ENCODE measurements at regions of chr19 and their contacts with region 1.

Region 1: GRCh38 chr19:19568802-19569756 is 31.0 kb downstream of the CILP2 start:
- DNase-seq: peak; percentile 33
- H3K4me3 Mint-ChIP-seq: no peak overlapping the region
- H3K27ac Mint-ChIP-seq: no peak overlapping the region
- H3K4me1 Mint-ChIP-seq: no peaks in the 10 kb centered on the region
- H3K27me3 Mint-ChIP-seq: no peaks in the 10 kb centered on the region
- CTCF ChIP-seq: no peak

Region 2: GRCh38 chr19:19475015-19475765 is 93.9 kb before region 1 on chr19:
- CTCF ChIA-PET with region 1: no interaction called
- POLR2A ChIA-PET with region 1: no interaction called
- intact Hi-C with region 1: no loop called
- DNase-seq: no peak
- H3K4me3 Mint-ChIP-seq: no peak overlapping the region
- H3K27ac Mint-ChIP-seq: peak overlapping the region; percentile 31
- H3K4me1 Mint-ChIP-seq: peaks cover 4% of the 10 kb centered on the region
- H3K27me3 Mint-ChIP-seq: no peaks in the 10 kb centered on the region
- CTCF ChIP-seq: no peak

Region 3: GRCh38 chr19:19540715-19541440 is 28.2 kb before region 1 on chr19:
- CTCF ChIA-PET with region 1: no interaction called
- POLR2A ChIA-PET with region 1: no interaction called
- intact Hi-C with region 1: no loop called
- DNase-seq: peak; percentile 46
- H3K4me3 Mint-ChIP-seq: no peak overlapping the region
- H3K27ac Mint-ChIP-seq: no peak overlapping the region
- H3K4me1 Mint-ChIP-seq: no peaks in the 10 kb centered on the region
- H3K27me3 Mint-ChIP-seq: no peaks in the 10 kb centered on the region
- CTCF ChIP-seq: no peak

Region 4: GRCh38 chr19:19554074-19555023 is 14.7 kb before region 1 on chr19:
- CTCF ChIA-PET with region 1: interaction called, 42 read pairs
- POLR2A ChIA-PET with region 1: interaction called, 4 read pairs
- intact Hi-C with region 1: no loop called
- DNase-seq: peak; percentile 66
- H3K4me3 Mint-ChIP-seq: no peak overlapping the region
- H3K27ac Mint-ChIP-seq: no peak overlapping the region
- H3K4me1 Mint-ChIP-seq: no peaks in the 10 kb centered on the region
- H3K27me3 Mint-ChIP-seq: no peaks in the 10 kb centered on the region
- CTCF ChIP-seq: peak; percentile 70

Region 5: DNA sequence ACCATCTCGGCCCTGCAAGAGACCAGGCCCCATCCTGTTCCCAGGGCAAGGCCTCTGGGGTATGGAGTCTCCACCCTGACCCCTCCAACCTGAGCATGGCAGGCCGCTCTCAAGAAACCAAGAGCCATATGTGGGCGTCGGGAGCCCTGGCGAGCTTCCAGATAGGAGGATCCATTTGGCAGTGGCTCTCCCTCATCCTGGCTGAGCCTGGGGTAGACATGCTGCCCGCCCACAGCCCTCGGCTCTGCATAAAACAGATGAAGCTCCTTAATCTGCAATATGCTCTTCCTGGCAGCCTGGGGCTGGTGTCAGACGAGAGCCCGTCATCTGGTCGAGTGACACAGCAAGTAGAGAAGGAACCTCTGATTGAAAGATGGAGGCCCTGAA is 88.3 kb after region 1 on chr19:
- CTCF ChIA-PET with region 1: no interaction called
- POLR2A ChIA-PET with region 1: no interaction called
- intact Hi-C with region 1: no loop called
- DNase-seq: no peak
- H3K4me3 Mint-ChIP-seq: no peak overlapping the region
- H3K27ac Mint-ChIP-seq: no peak overlapping the region
- H3K4me1 Mint-ChIP-seq: peaks cover 14% of the 10 kb centered on the region
- H3K27me3 Mint-ChIP-seq: no peaks in the 10 kb centered on the region
- CTCF ChIP-seq: no peak